Activated naive CD4-positive, alpha-beta T cell treated with anti-CD3 and anti-CD28 coated beads for 36 hours (primary cell): ENCODE measurements at regions of chr14 and their contacts with region 1.

Region 1: DNA sequence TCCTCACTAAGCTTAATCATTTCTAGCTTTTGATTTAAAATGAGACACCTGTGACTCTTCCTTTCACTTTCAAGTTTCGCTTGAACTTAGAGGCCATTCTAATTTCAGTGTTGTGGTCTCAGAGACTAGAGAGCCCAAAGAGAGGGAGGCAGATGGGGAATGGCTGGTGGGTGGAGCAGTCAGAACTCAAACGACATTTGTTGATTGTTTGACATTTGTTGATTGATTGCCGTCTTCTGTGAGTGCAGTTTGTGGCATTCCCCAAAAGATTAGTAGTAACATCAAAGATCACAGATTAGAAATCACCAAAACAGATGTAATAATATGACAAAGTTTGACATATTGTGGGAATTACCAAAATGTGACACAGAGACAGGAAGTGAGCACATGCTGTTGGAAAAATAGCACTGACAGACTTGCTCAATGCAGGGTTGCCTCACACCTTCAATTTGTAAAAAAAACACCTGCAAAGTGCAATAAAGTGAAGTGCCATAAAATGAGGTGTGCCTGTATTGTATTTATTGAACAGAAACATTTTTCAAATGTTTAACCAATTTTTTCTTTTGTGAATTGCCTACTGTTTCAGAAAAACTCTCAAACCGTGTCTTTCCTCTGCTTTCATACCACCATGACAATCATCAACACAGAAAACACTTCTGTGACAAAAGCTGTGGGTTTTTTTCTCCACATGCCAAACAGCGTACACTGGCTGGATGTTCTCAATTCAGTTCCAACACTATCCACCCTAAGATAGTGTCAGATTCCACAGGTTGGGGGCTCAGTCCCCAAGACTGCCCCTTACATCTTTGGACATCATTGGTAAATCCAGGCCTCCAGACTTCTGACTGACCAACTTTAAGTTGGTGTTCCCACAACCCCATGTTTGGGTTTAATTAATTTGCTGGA is 376.3 kb upstream of the RGS6 start:
- DNase-seq: peak; percentile 80
- H3K4me3 Mint-ChIP-seq: peak overlapping the region; percentile 56
- H3K27ac Mint-ChIP-seq: peak overlapping the region; percentile 93
- H3K4me1 Mint-ChIP-seq: peaks cover 71% of the 10 kb centered on the region
- H3K27me3 Mint-ChIP-seq: no peaks in the 10 kb centered on the region

Region 2: GRCh38 chr14:69673578-69674305 is 1882.2 kb before region 1 on chr14:
- CTCF ChIA-PET with region 1: no interaction called
- intact Hi-C with region 1: loop called (anchors 10 kb)
- DNase-seq: peak; percentile 37
- H3K4me3 Mint-ChIP-seq: peak overlapping the region; percentile 49
- H3K27ac Mint-ChIP-seq: peak overlapping the region; percentile 99
- H3K4me1 Mint-ChIP-seq: peaks cover 94% of the 10 kb centered on the region
- H3K27me3 Mint-ChIP-seq: no peaks in the 10 kb centered on the region

Region 3: DNA sequence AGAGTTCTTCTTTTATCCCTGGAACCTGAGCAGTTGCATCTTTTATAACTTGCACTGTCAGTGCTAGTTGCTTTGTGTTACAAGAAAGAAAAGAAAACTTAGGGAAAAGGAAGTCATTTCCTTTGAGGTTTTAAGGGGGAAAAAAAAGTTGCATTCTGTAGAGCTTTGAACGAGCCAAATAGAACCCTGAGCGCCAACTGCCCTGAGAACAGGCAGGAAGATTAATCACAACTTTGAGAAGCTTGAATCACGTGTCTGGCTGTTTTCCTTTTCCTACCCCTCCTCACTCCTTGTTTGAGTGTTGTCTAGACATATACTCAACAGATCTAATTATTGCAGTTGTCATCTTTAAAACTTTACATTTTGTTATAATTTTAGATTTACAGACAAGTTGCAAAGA is 636.1 kb before region 1 on chr14:
- CTCF ChIA-PET with region 1: no interaction called
- intact Hi-C with region 1: loop called (anchors 5 kb)
- DNase-seq: peak; percentile 48
- H3K4me3 Mint-ChIP-seq: peak overlapping the region; percentile 30
- H3K27ac Mint-ChIP-seq: peak overlapping the region; percentile 83
- H3K4me1 Mint-ChIP-seq: peaks cover 84% of the 10 kb centered on the region
- H3K27me3 Mint-ChIP-seq: no peaks in the 10 kb centered on the region

Region 4: GRCh38 chr14:71331403-71331802 is 224.5 kb before region 1 on chr14:
- CTCF ChIA-PET with region 1: no interaction called
- intact Hi-C with region 1: loop called (anchors 1 kb)
- DNase-seq: no peak
- H3K4me3 Mint-ChIP-seq: no peak overlapping the region
- H3K27ac Mint-ChIP-seq: no peak overlapping the region
- H3K4me1 Mint-ChIP-seq: peaks cover 64% of the 10 kb centered on the region
- H3K27me3 Mint-ChIP-seq: no peaks in the 10 kb centered on the region

Region 5: GRCh38 chr14:71403656-71404055 is 152.3 kb before region 1 on chr14:
- CTCF ChIA-PET with region 1: interaction called, 3 read pairs
- intact Hi-C with region 1: loop called (anchors 1 kb)
- DNase-seq: peak; percentile 31
- H3K4me3 Mint-ChIP-seq: no peak overlapping the region
- H3K27ac Mint-ChIP-seq: no peak overlapping the region
- H3K4me1 Mint-ChIP-seq: peaks cover 29% of the 10 kb centered on the region
- H3K27me3 Mint-ChIP-seq: no peaks in the 10 kb centered on the region

Region 6: GRCh38 chr14:71497645-71498086 is 58.2 kb before region 1 on chr14:
- CTCF ChIA-PET with region 1: no interaction called
- intact Hi-C with region 1: loop called (anchors 1 kb)
- DNase-seq: peak; percentile 19
- H3K4me3 Mint-ChIP-seq: no peak overlapping the region
- H3K27ac Mint-ChIP-seq: no peak overlapping the region
- H3K4me1 Mint-ChIP-seq: peaks cover 16% of the 10 kb centered on the region
- H3K27me3 Mint-ChIP-seq: no peaks in the 10 kb centered on the region

Region 7: DNA sequence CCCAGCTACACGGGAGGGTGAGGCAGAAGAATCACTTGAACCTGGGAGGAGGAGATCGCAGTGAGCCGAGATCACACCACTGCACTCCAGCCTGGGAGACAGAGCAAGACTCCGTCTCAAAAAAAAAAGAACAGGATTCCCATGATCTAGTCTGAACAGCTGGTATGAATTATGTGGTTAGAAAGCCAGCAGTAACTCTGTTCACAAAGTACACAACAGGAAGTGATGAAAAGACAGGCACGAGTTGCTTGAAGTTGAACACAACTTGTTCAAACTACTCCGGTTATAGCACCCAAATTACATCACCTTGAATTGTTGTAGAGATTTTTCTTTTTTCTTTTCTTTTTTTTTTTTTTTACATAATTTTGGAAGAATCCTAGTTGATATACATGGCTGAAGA is 137.5 kb after region 1 on chr14:
- CTCF ChIA-PET with region 1: no interaction called
- intact Hi-C with region 1: loop called (anchors 1 kb)
- DNase-seq: no peak
- H3K4me3 Mint-ChIP-seq: no peak overlapping the region
- H3K27ac Mint-ChIP-seq: no peak overlapping the region
- H3K4me1 Mint-ChIP-seq: peaks cover 7% of the 10 kb centered on the region
- H3K27me3 Mint-ChIP-seq: no peaks in the 10 kb centered on the region